HAP-1 (cell line): ENCODE measurements at regions of chr6 and their contacts with region 1.

Region 1: DNA sequence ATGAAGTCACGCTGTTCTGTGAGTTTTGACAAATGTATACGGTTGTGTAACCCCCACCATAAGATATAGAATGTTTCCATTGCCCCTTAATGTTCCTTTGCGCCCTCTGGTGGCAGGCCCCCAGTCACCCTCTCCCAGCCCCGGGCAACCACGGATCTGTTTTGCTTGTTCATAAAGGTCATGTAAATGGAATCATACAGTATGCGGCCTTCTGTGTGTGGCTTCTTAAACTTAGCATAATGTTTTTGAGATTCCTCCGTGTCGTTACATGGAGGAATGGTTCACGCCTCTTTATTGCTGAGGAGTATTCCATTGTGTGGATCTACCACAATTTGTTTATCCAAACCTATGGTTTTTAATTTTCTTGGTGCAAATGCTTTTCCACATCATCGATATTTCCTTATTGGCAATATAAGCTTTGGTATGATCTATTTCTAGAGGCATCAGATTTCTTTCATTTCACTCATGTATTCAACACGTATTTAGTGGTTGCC is 28.4 kb downstream of the LYRM2 start:
- DNase-seq: peak; percentile 60 to 90
- H3K4me3 ChIP-seq: no peak overlapping the region
- H3K4me1 ChIP-seq: no peaks in the 10 kb centered on the region
- H3K27me3 ChIP-seq: no peaks in the 10 kb centered on the region

Region 2: DNA sequence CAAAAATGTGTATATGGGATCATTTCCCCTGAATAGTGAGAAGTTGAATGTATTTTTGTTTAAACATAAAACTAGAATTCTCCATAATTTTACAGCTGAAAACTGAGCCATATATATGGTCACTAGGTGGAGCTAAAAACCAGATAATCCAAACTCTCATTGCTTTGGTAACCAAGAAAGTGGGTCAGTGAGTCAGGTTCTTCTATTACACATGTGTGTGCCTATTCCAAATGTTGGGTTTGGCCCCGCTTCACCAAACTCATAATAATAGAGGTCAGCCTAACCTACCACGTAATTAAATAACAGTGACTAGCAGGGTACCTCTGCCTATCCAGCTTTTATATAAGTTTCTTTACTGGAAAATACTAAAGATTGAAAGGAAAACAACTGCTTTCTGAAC is 627.5 kb before region 1 on chr6:
- in situ Hi-C with region 1: loop called (anchors 25 kb)
- DNase-seq: peak in 1 of 2 experiments; percentile 80
- H3K4me3 ChIP-seq: no peak overlapping the region
- H3K4me1 ChIP-seq: no peaks in the 10 kb centered on the region
- H3K27me3 ChIP-seq: no peaks in the 10 kb centered on the region; the same call in 1 of the 2 replicates

Region 3: GRCh38 chr6:89432875-89433251 is 177.3 kb before region 1 on chr6 and contains the start of gene ANKRD6:
- in situ Hi-C with region 1: loop called (anchors 5 kb)
- DNase-seq: peak; percentile 77 to 88
- H3K4me3 ChIP-seq: peak within 1 kb of the TSS; percentile 55
- H3K4me1 ChIP-seq: peaks cover 29% of the 10 kb centered on the region
- H3K27me3 ChIP-seq: no peaks in the 10 kb centered on the region